ENCODE measurements at regions of chrX and their contacts with region 1.

Region 1: DNA sequence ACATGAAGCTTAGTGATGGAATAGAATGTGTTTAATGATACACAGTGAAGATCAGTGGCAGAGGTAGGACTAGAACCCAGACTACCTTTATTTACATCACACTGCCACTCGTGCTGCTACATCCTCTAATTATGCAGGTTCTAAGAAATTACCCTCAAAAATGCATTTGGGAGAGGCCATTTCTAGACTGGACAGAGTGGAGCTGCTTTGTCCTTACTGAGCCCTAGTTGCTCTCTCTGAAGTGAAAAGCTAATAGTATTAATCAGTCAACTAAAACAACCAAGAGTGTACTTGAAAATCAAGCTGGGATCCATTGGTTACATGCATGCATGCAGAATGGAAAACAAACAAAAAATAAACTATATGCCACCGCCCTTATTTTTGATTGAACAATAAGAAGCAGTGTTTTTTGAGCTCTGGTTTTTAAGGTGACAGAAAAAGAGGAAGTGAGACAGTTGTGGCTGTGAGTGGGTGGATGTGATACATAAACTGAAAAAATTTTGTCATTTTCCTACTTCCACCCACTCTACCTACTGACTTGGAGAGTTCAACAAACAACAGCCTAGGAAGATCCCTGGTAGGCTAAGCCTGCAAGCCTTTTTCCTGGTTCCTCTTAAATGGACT is 6.8 kb upstream of the VSIG4 start:
- DNase-seq: peak; percentile 69
- H3K4me3 Mint-ChIP-seq: no peak overlapping the region
- H3K27ac Mint-ChIP-seq: peak overlapping the region; percentile 91
- H3K4me1 Mint-ChIP-seq: peaks cover 30% of the 10 kb centered on the region
- H3K27me3 Mint-ChIP-seq: no peaks in the 10 kb centered on the region

Region 2: GRCh38 chrX:65667503-65668376 is 379.0 kb before region 1 on chrX and contains the start of gene MSN:
- CTCF ChIA-PET with region 1: no interaction called
- intact Hi-C with region 1: loop called (anchors 2 kb)
- DNase-seq: peak; percentile 78
- H3K4me3 Mint-ChIP-seq: peak within 1 kb of the TSS; percentile 94
- H3K27ac Mint-ChIP-seq: peak within 1 kb of the TSS; percentile 94
- H3K4me1 Mint-ChIP-seq: peaks cover 23% of the 10 kb centered on the region
- H3K27me3 Mint-ChIP-seq: no peaks in the 10 kb centered on the region
- total RNA-seq, gene MSN: 482 to 507 TPM

Region 3: GRCh38 chrX:65723706-65724105 is 323.0 kb before region 1 on chrX:
- CTCF ChIA-PET with region 1: no interaction called
- intact Hi-C with region 1: loop called (anchors 1 kb)
- DNase-seq: peak; percentile 60
- H3K4me3 Mint-ChIP-seq: peak overlapping the region; percentile 29
- H3K27ac Mint-ChIP-seq: peak overlapping the region; percentile 88
- H3K4me1 Mint-ChIP-seq: peaks cover 88% of the 10 kb centered on the region
- H3K27me3 Mint-ChIP-seq: no peaks in the 10 kb centered on the region

Region 4: DNA sequence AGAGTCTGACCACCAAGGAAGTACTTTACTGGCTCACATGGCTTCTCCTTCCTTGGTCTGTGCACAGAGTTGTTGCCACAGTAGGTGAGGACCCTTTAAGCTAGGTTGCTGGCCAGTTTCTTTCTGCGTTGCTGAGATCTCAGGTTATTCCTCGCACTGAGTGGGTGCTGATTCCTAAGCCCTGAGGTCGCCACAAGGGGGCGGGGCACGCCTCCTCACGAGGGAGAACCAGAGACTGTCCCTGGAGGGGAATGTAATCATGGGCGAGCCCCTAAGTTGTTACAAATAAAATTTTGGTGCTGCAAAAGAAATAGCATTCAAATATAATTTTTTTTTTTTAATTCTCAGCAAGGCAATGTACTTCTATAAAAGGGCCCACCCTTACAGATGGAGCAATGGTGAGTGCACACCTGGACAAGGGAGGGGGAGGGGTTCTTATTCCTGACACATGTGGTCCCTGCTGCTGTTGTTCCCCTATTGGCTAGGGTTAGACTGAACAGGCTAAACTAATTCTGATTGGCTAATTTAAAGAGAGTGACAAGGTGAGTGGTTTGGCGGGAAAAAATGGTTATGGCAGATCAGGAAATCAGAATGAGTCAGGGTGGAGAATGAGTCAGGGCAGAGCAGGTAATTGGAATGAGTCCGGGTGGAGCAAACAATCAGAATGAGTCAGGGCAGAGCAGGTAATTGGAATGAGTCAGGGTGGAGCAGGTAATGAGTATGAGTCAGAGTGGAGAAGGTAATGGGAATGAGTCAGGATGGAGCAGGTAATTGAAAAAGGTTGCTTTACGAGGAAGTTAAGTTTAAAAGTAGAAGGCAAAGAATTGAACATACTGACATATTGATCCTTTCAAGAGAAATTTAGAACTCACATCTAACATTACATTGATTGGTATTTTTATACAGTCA is 114.3 kb before region 1 on chrX:
- CTCF ChIA-PET with region 1: no interaction called
- intact Hi-C with region 1: loop called (anchors 2 kb)
- DNase-seq: peak; percentile 66
- H3K4me3 Mint-ChIP-seq: no peak overlapping the region
- H3K27ac Mint-ChIP-seq: peak overlapping the region; percentile 73
- H3K4me1 Mint-ChIP-seq: peaks cover 20% of the 10 kb centered on the region
- H3K27me3 Mint-ChIP-seq: no peaks in the 10 kb centered on the region

Region 5: DNA sequence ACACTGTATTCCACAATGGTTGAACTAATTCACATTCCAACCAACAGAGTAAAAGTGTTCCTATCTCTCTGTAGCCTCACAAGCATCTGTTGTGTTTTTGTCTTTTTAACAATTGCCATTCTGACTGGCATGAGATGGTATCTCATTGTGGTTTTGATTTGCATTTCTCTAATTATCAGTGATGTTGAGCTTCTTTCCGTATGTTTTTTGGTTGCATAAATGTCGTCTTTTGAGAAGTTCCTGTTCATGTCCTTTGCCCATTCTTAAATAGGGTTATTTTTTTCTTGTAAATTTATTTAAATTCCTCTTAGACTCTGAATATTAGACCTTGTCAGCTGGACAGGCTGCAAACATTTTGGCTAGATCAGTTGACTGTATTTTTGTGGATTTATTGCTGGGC is 85.0 kb before region 1 on chrX:
- CTCF ChIA-PET with region 1: no interaction called
- intact Hi-C with region 1: no loop called
- DNase-seq: no peak
- H3K4me3 Mint-ChIP-seq: no peak overlapping the region
- H3K27ac Mint-ChIP-seq: no peak overlapping the region
- H3K4me1 Mint-ChIP-seq: no peaks in the 10 kb centered on the region
- H3K27me3 Mint-ChIP-seq: no peaks in the 10 kb centered on the region

Region 6: DNA sequence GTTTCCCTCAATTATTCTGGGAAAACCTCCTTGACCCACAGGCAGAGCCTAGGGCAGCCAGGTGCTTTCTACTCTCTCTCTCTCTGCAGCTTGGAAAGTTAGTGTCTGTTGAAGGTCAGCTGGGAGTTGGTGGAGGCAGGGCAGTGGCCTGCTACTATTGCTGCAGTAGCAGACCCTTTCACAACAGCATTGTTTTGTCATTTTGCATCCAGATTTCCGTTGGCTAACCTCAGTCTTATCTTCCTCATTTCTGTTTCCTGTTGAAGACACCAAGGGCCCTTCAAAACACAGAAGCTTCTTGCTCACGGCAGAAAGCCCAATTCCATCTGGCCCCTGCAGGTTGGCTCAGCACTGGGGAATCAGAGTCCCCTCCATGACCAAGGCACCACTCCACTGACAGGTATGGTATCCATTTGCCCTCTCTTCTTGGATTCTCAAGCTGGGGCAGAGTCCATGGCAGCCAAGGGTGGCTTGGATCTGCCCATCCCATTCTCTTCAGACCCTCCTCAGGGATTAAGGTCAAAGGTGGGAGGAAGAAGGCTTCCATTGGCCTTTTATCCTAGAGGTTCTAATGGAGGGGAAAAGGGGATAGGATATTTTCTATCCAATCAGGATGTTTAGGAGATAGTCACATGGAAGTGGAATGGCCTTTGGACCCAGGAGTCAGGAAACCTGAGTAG is 31.4 kb before region 1 on chrX:
- CTCF ChIA-PET with region 1: no interaction called
- intact Hi-C with region 1: loop called (anchors 2 kb)
- DNase-seq: no peak
- H3K4me3 Mint-ChIP-seq: no peak overlapping the region
- H3K27ac Mint-ChIP-seq: no peak overlapping the region
- H3K4me1 Mint-ChIP-seq: peaks cover 58% of the 10 kb centered on the region
- H3K27me3 Mint-ChIP-seq: no peaks in the 10 kb centered on the region

Region 7: GRCh38 chrX:66074920-66075879 is 28.5 kb after region 1 on chrX:
- CTCF ChIA-PET with region 1: interaction called, 5 read pairs
- intact Hi-C with region 1: loop called (anchors 1 kb)
- DNase-seq: peak; percentile 73
- H3K4me3 Mint-ChIP-seq: peak overlapping the region; percentile 28
- H3K27ac Mint-ChIP-seq: peak overlapping the region; percentile 48
- H3K4me1 Mint-ChIP-seq: peaks cover 25% of the 10 kb centered on the region
- H3K27me3 Mint-ChIP-seq: no peaks in the 10 kb centered on the region